A549 (cell line): ENCODE measurements at regions of chrX and their contacts with region 1.

Region 1: GRCh38 chrX:106894392-106894909 is 8.7 kb downstream of the RIPPLY1 start:
- DNase-seq: peak; percentile 50 to 84
- ATAC-seq: peak; percentile 92 to 94
- H3K4me3 ChIP-seq: no peak overlapping the region
- H3K27ac ChIP-seq: peak overlapping the region; percentile 88 to 90
- H3K4me1 ChIP-seq: peaks cover 56% of the 10 kb centered on the region
- CTCF ChIP-seq: peak; percentile 84
- EP300 ChIP-seq: no peak
- POLR2A ChIP-seq: no peak
- RAD21 ChIP-seq: peak; percentile 89 to 93

Region 2: DNA sequence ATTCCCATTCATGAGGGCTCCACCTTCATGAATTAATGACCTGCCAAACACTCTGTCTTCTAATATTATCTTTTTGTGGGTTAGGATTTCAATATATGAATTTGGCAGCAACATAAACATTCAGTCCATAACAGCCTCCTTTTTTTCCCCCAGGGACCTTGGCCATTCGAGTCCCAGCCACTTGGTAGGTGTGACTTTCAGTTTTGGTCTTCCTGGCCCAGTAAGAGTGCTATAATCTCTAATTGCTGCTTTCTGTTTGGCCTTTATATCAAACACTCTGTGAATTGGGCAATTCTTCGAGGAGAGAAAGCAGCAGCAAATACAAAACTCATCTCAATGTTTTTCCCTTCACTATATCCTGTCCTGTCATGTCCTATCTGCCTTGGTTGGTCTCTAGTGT is 295.0 kb before region 1 on chrX:
- CTCF ChIA-PET with region 1: no interaction called
- POLR2A ChIA-PET with region 1: no interaction called
- DNase-seq: no peak
- ATAC-seq: no peak
- H3K4me3 ChIP-seq: no peak overlapping the region
- H3K27ac ChIP-seq: no peak overlapping the region
- H3K4me1 ChIP-seq: no peaks in the 10 kb centered on the region
- CTCF ChIP-seq: no peak
- EP300 ChIP-seq: no peak
- POLR2A ChIP-seq: no peak
- RAD21 ChIP-seq: no peak

Region 3: DNA sequence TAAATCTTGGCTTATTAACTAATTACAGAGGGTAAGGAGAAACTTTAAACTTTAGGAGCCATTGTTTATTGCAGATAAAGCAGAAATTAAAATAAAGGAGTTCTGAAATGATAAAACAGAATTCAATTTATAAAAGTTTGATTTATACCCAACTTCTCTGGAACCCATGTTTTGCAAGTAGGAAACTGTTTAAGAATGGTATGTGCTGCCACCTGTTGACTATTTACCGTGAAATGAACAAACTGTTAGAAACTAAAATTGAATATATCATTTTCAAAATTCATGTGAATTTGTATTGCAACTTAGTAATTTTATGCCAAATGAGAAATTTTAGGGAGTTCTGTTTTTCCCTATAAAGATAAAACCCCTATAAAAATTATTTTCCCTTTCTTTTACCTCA is 103.0 kb before region 1 on chrX:
- CTCF ChIA-PET with region 1: no interaction called
- POLR2A ChIA-PET with region 1: no interaction called
- DNase-seq: peak in 1 of 2 experiments; percentile 16
- ATAC-seq: no peak
- H3K4me3 ChIP-seq: no peak overlapping the region
- H3K27ac ChIP-seq: no peak overlapping the region
- H3K4me1 ChIP-seq: no peaks in the 10 kb centered on the region
- CTCF ChIP-seq: peak; percentile 58
- EP300 ChIP-seq: no peak
- POLR2A ChIP-seq: no peak
- RAD21 ChIP-seq: peak; percentile 53 to 64; a peak in 4 of 5 replicates

Region 4: DNA sequence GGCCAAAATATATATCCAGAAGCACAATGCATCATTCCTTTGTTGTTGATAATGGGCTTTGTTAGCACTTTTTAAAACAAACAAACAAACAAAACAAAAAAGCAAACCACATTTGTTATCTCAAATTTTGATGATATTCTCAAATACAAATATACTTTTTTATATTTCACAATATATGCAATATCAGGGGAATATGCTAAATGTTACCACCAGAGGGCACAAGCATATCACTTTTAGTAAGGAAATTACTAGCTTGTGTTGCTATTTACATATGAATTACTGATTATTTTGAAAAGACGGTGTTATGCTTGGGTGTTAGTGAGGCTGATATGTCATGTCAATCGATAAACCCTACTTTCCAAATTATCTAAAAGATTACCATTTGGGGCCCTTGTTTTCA is 20.4 kb before region 1 on chrX:
- CTCF ChIA-PET with region 1: interaction called, 29 read pairs
- POLR2A ChIA-PET with region 1: no interaction called
- DNase-seq: peak; percentile 10 to 35
- ATAC-seq: no peak
- H3K4me3 ChIP-seq: no peak overlapping the region
- H3K27ac ChIP-seq: no peak overlapping the region; a peak in 1 of 6 replicates
- H3K4me1 ChIP-seq: peaks cover 9% of the 10 kb centered on the region; the same call in 2 of the 3 replicates
- CTCF ChIP-seq: peak; percentile 73
- EP300 ChIP-seq: no peak
- POLR2A ChIP-seq: no peak
- RAD21 ChIP-seq: peak; percentile 74 to 82

Region 5: GRCh38 chrX:106912864-106913263 is 18.4 kb after region 1 on chrX:
- CTCF ChIA-PET with region 1: interaction called, 58 read pairs
- POLR2A ChIA-PET with region 1: no interaction called
- DNase-seq: no peak
- ATAC-seq: no peak
- H3K4me3 ChIP-seq: no peak overlapping the region
- H3K27ac ChIP-seq: peak overlapping the region; percentile 60 to 86
- H3K4me1 ChIP-seq: peaks cover 39% of the 10 kb centered on the region
- CTCF ChIP-seq: no peak
- EP300 ChIP-seq: no peak
- POLR2A ChIP-seq: no peak
- RAD21 ChIP-seq: no peak

Region 6: DNA sequence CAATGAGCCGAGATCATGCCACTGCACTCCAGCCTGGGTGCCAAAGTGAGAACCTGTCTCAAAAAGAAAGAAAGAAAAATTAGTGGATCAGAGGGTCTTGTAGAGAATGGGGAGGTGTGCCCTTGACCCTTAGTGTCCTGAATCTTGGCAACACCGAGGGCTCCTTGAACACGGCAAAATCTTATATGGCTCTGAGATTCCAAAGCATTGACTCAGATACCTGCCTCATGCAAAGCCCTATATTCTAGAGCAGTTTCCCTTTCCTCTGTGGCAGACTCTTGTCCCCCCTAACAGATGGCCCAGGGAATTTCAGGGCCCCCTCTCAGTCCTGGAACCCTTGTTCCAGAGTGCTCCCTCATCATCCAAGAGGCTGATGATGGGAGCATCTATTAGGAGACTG is 32.6 kb after region 1 on chrX:
- CTCF ChIA-PET with region 1: interaction called, 38 read pairs
- POLR2A ChIA-PET with region 1: no interaction called
- DNase-seq: no peak
- ATAC-seq: peak in 1 of 2 experiments; percentile 32; a peak in 3 of 6 replicates
- H3K4me3 ChIP-seq: no peak overlapping the region
- H3K27ac ChIP-seq: peak overlapping the region; percentile 92 to 99
- H3K4me1 ChIP-seq: peaks cover 60% of the 10 kb centered on the region
- CTCF ChIP-seq: no peak
- EP300 ChIP-seq: no peak
- POLR2A ChIP-seq: no peak
- RAD21 ChIP-seq: no peak

Region 7: DNA sequence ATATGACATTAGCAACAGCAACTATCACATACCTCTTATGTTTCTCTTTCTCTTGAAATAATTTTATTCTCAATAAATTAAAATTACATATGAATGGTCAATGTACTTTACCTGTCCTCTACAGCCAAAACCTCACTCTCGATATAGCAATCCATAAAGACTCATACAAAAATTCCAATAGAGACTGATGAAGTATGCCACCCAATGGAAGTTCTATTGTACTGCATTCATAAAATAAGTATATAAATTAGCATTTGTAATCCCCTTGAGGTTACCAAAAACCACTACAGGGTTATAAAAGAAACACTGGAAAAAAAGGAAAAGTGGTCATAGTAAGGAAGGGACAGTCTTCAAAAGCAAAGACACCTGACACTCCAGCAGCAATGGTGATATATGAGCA is 58.5 kb after region 1 on chrX:
- CTCF ChIA-PET with region 1: interaction called, 94 read pairs
- POLR2A ChIA-PET with region 1: no interaction called
- DNase-seq: peak in 1 of 2 experiments; percentile 32
- ATAC-seq: no peak; a peak in 1 of 6 replicates
- H3K4me3 ChIP-seq: no peak overlapping the region
- H3K27ac ChIP-seq: peak overlapping the region; percentile 88 to 94
- H3K4me1 ChIP-seq: peaks cover 91% of the 10 kb centered on the region
- CTCF ChIP-seq: peak; percentile 60
- EP300 ChIP-seq: no peak
- POLR2A ChIP-seq: no peak
- RAD21 ChIP-seq: peak; percentile 42 to 57; a peak in 4 of 5 replicates

Region 8: GRCh38 chrX:106987488-106987887 is 93.0 kb after region 1 on chrX:
- CTCF ChIA-PET with region 1: interaction called, 12 read pairs
- POLR2A ChIA-PET with region 1: interaction called, 7 read pairs
- DNase-seq: no peak
- ATAC-seq: no peak
- H3K4me3 ChIP-seq: no peak overlapping the region
- H3K27ac ChIP-seq: no peak overlapping the region
- H3K4me1 ChIP-seq: peaks cover 12% of the 10 kb centered on the region; the same call in 2 of the 3 replicates
- CTCF ChIP-seq: no peak
- EP300 ChIP-seq: no peak
- POLR2A ChIP-seq: no peak
- RAD21 ChIP-seq: no peak